Activated CD8-positive, alpha-beta T cell treated with anti-CD3 and anti-CD28 coated beads, Interleukin-2, amount 10 ng/mL, durations not matched to agents 7 days and 5 days (primary cell): ENCODE measurements at regions of chr10 and their contacts with region 1.

Region 1: GRCh38 chr10:119207367-119207668 is at the start of gene GRK5:
- DNase-seq: peak; percentile 96
- ATAC-seq: peak; percentile 86
- H3K4me3 Mint-ChIP-seq: peak within 1 kb of the TSS; percentile 89
- H3K27ac Mint-ChIP-seq: peak within 1 kb of the TSS; percentile 97
- H3K4me1 Mint-ChIP-seq: peaks cover 51% of the 10 kb centered on the region
- H3K27me3 Mint-ChIP-seq: no peaks in the 10 kb centered on the region
- total RNA-seq, gene GRK5: 16.9 to 17.6 TPM

Region 2: DNA sequence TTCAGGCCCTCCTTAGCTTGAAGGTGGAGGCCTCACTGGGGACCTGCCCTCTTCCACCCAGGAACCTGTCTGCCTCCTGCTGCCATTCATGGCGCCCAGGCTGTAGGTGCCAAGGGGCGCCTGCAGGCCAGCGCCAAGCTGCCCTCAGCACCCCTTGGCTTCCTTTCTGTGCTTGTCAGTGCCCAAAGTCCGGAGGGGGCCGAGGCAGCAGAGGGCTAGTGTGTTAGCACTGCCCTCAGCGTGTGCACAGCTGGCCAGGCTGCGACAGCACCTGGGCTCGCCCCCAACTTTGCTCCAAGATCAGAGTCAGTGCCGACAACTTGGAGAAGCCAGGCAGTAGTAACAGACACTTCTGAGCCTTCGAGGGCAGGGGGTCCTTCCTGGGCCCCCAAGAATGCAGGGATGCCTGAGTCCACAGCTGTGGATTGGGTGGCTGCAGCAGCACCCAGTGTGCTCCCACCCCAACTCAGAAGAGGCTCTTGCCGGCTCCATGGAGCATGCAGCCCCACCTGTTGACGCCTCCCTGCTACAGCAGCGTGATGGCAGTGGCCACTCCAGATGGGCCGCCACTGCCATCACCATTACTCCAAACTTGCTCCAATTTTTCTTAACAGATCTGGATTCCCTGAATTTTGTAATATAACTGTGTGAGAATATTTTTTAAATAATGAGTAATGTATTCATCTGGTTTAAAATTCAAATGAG is 494.2 kb before region 1 on chr10:
- CTCF ChIA-PET with region 1: no interaction called
- POLR2A ChIA-PET with region 1: no interaction called
- DNase-seq: no peak
- ATAC-seq: peak; percentile 36
- H3K4me3 Mint-ChIP-seq: no peak overlapping the region
- H3K27ac Mint-ChIP-seq: no peak overlapping the region
- H3K4me1 Mint-ChIP-seq: peaks cover 25% of the 10 kb centered on the region
- H3K27me3 Mint-ChIP-seq: no peaks in the 10 kb centered on the region

Region 3: GRCh38 chr10:119270762-119271366 is 63.5 kb after region 1 on chr10:
- CTCF ChIA-PET with region 1: interaction called, 35 read pairs
- POLR2A ChIA-PET with region 1: interaction called, 11 read pairs
- DNase-seq: peak; percentile 68
- ATAC-seq: peak; percentile 39
- H3K4me3 Mint-ChIP-seq: peak overlapping the region; percentile 22
- H3K27ac Mint-ChIP-seq: peak overlapping the region; percentile 78
- H3K4me1 Mint-ChIP-seq: peaks cover 67% of the 10 kb centered on the region
- H3K27me3 Mint-ChIP-seq: no peaks in the 10 kb centered on the region

Region 4: DNA sequence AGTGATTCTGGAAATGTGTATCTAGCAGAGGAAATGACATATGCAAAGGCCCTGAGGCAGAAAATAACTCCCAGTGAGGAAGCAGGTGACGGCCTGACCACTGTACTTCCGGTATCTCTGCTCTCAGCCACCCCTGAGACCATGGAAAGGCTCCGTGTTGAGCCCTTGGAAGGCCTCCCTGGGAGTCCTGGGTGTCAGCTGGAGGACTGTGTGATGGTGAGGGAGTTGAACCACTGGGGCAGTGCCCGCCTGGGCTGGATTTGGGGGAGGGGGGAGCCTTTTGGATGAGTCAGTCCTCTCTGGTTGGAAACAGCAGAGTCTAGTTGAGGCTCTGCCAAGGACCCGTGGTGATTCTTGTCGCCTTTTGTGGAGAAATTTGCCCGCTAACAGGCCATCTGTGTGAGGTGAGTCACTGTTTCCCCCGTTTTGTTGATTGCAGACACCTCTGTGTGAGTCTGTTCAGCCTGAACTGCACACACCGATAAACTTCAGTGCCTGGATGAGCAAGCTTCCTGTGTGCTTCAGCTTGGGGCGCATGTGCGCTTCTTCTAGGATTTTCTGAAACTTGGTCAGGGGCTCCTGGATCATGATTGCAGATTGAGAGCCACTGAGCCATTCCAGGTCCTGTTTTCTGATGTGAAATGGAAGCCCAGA is 98.7 kb after region 1 on chr10:
- CTCF ChIA-PET with region 1: interaction called, 74 read pairs
- POLR2A ChIA-PET with region 1: interaction called, 35 read pairs
- DNase-seq: peak; percentile 91
- ATAC-seq: peak; percentile 86
- H3K4me3 Mint-ChIP-seq: peak overlapping the region; percentile 80
- H3K27ac Mint-ChIP-seq: peak overlapping the region; percentile 100
- H3K4me1 Mint-ChIP-seq: peaks cover 78% of the 10 kb centered on the region
- H3K27me3 Mint-ChIP-seq: peaks cover 15% of the 10 kb centered on the region

Region 5: DNA sequence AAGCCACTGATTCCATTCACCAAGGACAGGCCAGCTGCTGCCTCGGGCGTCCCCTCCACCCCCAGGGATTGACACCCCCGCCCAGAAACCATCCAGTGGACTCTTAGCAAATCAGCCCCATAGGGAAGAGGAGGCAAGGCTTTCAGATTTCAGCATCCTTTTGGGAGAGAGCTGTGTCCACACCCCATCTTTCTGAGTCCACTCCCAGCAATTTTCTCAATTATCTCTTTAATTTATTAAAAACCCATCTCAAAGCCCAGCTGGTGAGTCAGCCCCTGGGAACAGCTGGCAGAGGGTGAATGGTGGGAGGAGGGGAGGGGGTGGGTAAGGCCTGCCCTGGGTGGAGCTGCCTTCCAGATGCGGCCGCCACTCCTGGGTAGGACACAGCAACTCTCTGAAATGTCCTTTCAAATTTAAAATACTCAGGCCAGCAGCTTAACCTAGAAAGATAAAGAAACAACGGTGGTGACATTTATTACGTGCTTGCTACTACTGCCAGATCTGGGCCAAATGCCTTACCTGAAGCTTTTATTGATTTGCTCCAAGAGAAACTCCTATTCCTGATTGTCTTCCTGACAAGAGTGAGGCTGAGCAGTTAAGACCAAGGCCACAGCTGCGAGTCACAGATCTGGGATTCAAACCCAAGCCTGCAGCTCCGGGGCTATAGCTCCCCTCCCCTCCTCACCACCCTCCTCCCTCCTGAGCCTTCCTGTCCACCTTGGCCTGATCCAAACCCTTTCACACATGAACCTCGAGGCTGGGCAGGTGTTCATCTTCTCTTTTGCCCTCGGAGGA is 214.8 kb after region 1 on chr10:
- CTCF ChIA-PET with region 1: interaction called, 66 read pairs
- POLR2A ChIA-PET with region 1: interaction called, 5 read pairs
- DNase-seq: no peak
- ATAC-seq: no peak
- H3K4me3 Mint-ChIP-seq: no peak overlapping the region
- H3K27ac Mint-ChIP-seq: no peak overlapping the region
- H3K4me1 Mint-ChIP-seq: no peaks in the 10 kb centered on the region
- H3K27me3 Mint-ChIP-seq: no peaks in the 10 kb centered on the region

Region 6: GRCh38 chr10:119494236-119495060 is 287.1 kb after region 1 on chr10:
- CTCF ChIA-PET with region 1: interaction called, 23 read pairs
- POLR2A ChIA-PET with region 1: interaction called, 3 read pairs
- DNase-seq: no peak
- ATAC-seq: no peak
- H3K4me3 Mint-ChIP-seq: no peak overlapping the region
- H3K27ac Mint-ChIP-seq: peak overlapping the region; percentile 79
- H3K4me1 Mint-ChIP-seq: peaks cover 83% of the 10 kb centered on the region
- H3K27me3 Mint-ChIP-seq: no peaks in the 10 kb centered on the region